ENCODE measurements at regions of chr20 and their contacts with region 1.

Region 1: DNA sequence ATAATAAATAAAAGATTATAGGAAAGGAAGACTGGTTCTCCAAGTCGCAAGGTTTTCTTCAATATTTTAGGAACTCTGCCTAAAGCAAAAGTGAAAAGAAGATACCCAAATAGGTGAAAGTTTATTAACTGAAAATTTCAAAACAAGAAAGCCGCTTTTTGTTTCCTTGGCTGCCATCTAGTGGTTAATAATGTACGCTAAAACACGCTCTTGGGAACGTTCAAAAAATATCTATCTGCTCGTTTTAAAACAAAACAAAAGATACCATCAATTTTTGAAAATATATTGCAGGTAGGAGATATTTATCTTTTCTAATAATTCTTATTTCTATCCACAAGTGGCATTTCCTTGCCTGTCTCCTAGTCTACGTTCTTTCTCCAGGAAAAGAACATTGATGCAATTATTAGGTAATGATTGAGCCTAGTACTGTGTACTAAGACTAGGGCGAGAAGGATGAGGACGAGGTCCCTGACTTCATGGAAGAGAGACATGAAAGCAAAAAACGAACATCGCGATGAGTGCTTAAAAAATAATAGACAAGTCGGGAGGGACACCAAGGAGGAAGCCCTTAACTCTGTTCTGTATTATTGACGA is 97.2 kb downstream of the SPTLC3 start:
- DNase-seq: no peak
- H3K4me3 Mint-ChIP-seq: no peak overlapping the region
- H3K27ac Mint-ChIP-seq: no peak overlapping the region
- H3K4me1 Mint-ChIP-seq: no peaks in the 10 kb centered on the region
- H3K27me3 Mint-ChIP-seq: peaks cover 3% of the 10 kb centered on the region

Region 2: DNA sequence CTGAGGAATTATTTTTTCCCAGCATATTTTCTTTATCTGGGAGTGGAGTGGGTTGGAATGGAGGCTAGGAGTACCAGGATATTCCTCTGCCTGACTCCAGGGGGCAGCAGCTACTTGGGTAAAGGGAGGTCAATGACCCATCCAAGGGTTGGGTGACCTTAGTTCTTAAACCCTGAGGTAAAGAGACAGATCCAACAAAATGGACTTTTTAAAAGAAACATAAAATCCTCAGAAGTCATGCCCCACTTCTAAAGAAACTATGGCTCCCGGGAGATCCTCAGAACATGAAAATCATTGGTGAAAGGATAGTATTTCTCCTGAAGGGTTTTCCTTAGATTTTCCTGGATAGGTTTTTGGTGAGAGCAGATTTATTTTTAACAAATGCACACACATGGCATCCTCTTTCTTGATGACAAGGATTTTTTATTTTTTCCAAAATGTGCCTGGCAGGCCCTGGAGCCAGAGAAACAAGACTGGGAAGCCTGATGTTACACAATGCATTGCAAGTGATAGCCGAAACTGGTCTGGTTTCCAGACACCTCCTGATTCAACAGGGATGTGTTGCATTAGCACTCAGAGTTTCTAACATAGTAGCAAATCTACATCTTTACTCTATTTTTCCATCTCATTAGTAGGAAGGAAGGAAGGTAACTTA is 1429.2 kb before region 1 on chr20:
- intact Hi-C with region 1: loop called (anchors 5 kb)
- DNase-seq: peak; percentile 58
- H3K4me3 Mint-ChIP-seq: no peak overlapping the region
- H3K27ac Mint-ChIP-seq: no peak overlapping the region
- H3K4me1 Mint-ChIP-seq: no peaks in the 10 kb centered on the region
- H3K27me3 Mint-ChIP-seq: no peaks in the 10 kb centered on the region

Region 3: DNA sequence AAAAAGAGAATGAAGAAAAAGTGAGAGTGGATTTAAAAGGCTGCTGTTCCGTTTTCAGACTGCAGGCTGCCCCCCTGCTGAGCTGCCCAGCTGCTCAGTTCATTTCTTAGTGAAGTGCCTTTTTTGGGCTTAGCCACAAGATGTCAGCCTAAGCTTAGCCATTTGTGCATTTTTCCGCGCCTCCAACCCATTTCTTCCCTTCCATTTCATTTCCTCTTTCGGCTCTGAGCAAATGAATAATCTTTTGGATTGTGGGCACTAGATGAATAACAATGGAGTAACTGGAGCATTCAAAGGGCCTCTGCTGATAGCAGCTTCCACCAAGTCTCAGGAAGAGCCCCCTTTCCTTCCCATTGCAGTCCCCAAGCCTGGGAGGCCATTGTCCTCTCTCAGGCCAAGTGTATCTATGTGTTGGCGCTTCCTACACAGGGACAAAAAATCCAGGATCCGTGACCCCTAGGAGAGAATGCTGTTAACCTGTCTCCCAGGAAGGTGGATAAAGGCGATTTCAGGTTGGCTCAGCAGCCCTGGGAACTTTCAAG is 180.7 kb before region 1 on chr20:
- intact Hi-C with region 1: loop called (anchors 1 kb)
- DNase-seq: peak; percentile 74
- H3K4me3 Mint-ChIP-seq: no peak overlapping the region
- H3K27ac Mint-ChIP-seq: no peak overlapping the region
- H3K4me1 Mint-ChIP-seq: peaks cover 4% of the 10 kb centered on the region
- H3K27me3 Mint-ChIP-seq: peaks cover 2% of the 10 kb centered on the region

Region 4: GRCh38 chr20:12970372-12970821 is 135.6 kb before region 1 on chr20:
- intact Hi-C with region 1: loop called (anchors 1 kb)
- DNase-seq: peak; percentile 61
- H3K4me3 Mint-ChIP-seq: no peak overlapping the region
- H3K27ac Mint-ChIP-seq: no peak overlapping the region
- H3K4me1 Mint-ChIP-seq: no peaks in the 10 kb centered on the region
- H3K27me3 Mint-ChIP-seq: peaks cover 5% of the 10 kb centered on the region

Measured in activated CD4-positive, alpha-beta T cell treated with anti-CD3 and anti-CD28 coated beads, Interleukin-2, amount 10 ng/mL, durations not matched to agents 24 days and 14 days (primary cell).